Ovary (tissue), 10 donors: ENCODE measurements at regions of chr4 and their contacts with region 1.

Region 1: DNA sequence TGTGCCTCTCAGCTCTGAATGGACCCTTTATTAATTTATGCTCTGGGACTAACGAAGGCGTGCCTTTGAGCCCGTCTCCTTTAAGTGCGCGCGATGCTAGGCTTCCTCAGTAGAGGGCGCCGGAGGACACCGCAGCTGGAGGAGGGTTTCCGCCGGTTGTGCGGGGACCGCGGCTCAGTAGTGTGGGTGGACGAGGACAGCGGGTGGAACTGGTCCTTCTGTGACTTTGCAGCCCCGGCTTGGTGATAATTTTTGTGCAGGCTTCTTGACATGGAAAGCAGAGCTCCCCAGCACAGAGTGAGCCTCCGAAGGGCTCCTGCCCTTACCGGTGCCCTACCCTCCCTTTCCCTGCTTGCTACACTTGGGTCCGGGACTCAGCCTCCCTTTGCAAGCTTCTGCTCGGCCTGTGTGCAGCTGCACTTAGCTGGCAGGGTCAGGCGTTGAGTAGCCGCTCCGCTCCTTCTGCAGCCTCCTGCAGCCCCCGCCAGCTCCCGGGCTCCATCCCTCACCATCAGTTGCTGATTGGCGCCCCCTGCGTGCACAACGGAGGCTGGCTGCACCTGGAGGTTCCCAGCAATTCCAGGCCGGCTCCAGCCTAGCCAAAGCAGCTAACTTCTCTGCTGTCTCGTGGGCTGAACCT is 26.8 kb upstream of the BOD1L1 start:
- DNase-seq: peak; percentile 66 to 87 (median 79)
- H3K4me3 ChIP-seq: peak overlapping the region; percentile 45
- H3K27ac ChIP-seq: no peak overlapping the region
- H3K4me1 ChIP-seq: no peaks in the 10 kb centered on the region
- H3K27me3 ChIP-seq: no peaks in the 10 kb centered on the region
- CTCF ChIP-seq: peak; percentile 32 to 90 (median 58)
- EP300 ChIP-seq: no peak
- POLR2A ChIP-seq: no peak

Region 2: GRCh38 chr4:15162465-15163283 is 1508.4 kb after region 1 on chr4:
- intact Hi-C with region 1: loop called in 1 of 4 experiments (anchors 10 kb)
- DNase-seq: no peak
- H3K4me3 ChIP-seq: no peak overlapping the region
- H3K27ac ChIP-seq: no peak overlapping the region
- H3K4me1 ChIP-seq: no peaks in the 10 kb centered on the region
- H3K27me3 ChIP-seq: no peaks in the 10 kb centered on the region
- CTCF ChIP-seq: peak in 1 of 3 donors; percentile 42
- EP300 ChIP-seq: no peak
- POLR2A ChIP-seq: no peak